Naive thymus-derived CD4-positive, alpha-beta T cell (primary cell): ENCODE measurements at regions of chr16 and their contacts with region 1.

Region 1: DNA sequence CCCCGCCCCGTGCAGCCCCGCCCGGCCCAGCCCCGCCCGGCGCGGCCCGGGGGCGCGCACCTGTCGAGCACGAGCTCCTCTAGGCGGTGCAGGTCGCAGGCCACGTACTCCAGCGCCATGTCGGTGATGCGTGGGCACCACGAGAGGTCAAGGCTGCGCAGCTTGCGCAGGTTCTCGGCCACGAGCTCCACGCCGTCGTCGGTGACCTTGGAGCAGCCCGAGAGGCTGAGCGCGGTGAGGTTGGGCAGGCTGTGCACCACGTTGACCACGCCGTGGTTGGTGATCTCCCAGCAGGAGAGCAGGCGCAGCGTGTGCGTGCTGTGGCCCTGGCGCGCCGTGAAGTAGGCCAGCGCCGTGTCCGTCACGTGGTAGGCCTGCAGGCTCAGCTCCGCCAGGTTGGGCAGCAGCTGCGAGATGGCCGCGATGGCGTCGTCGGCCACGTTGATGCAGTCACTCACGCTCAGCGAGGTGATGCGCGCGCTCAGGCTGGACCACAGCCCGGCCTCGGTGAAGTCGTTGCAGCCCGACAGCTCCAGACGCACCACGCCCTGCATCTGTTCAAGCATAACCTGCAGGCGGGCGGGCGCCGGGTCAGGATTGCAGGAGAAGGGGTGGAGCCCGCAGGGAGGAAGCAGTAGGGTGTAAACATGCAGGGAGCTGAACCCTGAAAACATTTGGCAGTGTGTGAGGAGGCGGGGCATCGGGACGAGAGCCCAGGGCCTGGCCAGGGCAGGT is 5.3 kb upstream of the WDR24 start:
- DNase-seq: peak; percentile 53 to 81 (median 74)
- ATAC-seq: peak; percentile 90
- H3K4me3 ChIP-seq: peak overlapping the region; percentile 91
- H3K4me3 Mint-ChIP-seq: peak overlapping the region; percentile 76 to 86 (median 84)
- H3K27ac ChIP-seq: peak overlapping the region; percentile 54
- H3K27ac Mint-ChIP-seq: peak overlapping the region; percentile 20 to 86 (median 79)
- H3K4me1 ChIP-seq: peaks cover 22 to 26% of the 10 kb centered on the region in 2 donors
- H3K4me1 Mint-ChIP-seq: peaks cover 4 to 40% (median 23%) of the 10 kb centered on the region in 7 donors
- H3K27me3 ChIP-seq: no peaks in the 10 kb centered on the region
- H3K27me3 Mint-ChIP-seq: peaks cover 0 to 22% (median 0%) of the 10 kb centered on the region in 5 donors

Region 2: DNA sequence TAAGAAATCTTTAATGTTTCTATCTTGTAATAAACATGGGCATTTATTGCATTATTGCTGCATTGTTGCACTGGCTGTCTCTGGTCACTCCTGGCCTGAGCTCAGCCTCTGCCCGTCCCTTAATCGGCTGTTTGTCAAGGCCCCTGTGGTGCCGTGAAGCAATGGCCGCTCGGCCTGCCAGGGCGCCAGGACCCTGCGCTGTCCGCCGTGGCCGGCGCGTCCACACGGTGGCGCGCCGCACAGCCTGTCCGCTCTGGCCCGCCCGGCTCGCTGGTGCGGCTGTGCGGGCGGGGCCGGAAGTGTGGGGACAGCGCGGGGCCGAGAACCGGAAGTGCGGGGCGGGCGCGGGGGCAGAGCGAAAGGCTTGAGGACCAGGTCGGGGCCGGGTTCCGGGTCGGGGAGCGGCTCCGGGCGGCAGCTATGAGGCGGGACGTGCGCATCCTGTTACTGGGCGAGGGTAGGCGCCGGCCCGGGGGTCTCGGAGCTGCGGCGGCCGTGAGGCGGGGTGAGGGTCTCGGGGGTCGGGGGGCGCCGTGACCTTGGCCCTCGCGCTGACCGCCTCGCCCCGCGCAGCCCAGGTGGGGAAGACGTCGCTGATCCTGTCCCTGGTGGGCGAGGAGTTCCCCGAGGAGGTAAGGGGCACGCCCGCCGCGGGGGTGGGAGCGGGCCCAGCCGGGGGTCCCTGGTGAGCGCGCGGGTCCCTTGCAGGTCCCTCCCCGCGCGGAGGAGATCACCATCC is 27.6 kb before region 1 on chr16 and contains the start of gene RHOT2:
- CTCF ChIA-PET with region 1: no interaction called
- POLR2A ChIA-PET with region 1: interaction called, 33 read pairs
- intact Hi-C with region 1: loop called in 1 of 2 experiments (anchors 1 kb)
- DNase-seq: peak; percentile 73 to 99 (median 87)
- ATAC-seq: peak; percentile 99
- H3K4me3 ChIP-seq: peak within 1 kb of the TSS; percentile 42
- H3K4me3 Mint-ChIP-seq: peak within 1 kb of the TSS; percentile 71 to 84 (median 80)
- H3K27ac ChIP-seq: peak within 1 kb of the TSS; percentile 75
- H3K27ac Mint-ChIP-seq: peak within 1 kb of the TSS in 8 of 9 donors; percentile 61 to 93 (median 86)
- H3K4me1 ChIP-seq: peaks cover 9 to 12% of the 10 kb centered on the region in 2 donors
- H3K4me1 Mint-ChIP-seq: peaks cover 0 to 10% (median 6%) of the 10 kb centered on the region in 7 donors
- H3K27me3 ChIP-seq: no peaks in the 10 kb centered on the region
- H3K27me3 Mint-ChIP-seq: no peaks in the 10 kb centered on the region
- total RNA-seq, gene RHOT2: 145 to 232 (median 186) TPM

Region 3: GRCh38 chr16:684067-684794 is 11.3 kb before region 1 on chr16 and contains the start of gene JMJD8:
- CTCF ChIA-PET with region 1: no interaction called
- POLR2A ChIA-PET with region 1: interaction called, 34 read pairs
- intact Hi-C with region 1: loop called in 1 of 2 experiments (anchors 1 kb)
- DNase-seq: peak; percentile 88 to 97 (median 91)
- ATAC-seq: peak; percentile 75
- H3K4me3 ChIP-seq: peak within 1 kb of the TSS; percentile 52
- H3K4me3 Mint-ChIP-seq: peak within 1 kb of the TSS; percentile 58 to 87 (median 76)
- H3K27ac ChIP-seq: peak within 1 kb of the TSS; percentile 78
- H3K27ac Mint-ChIP-seq: peak within 1 kb of the TSS in 6 of 9 donors; percentile 38 to 82 (median 58)
- H3K4me1 ChIP-seq: peaks cover 9 to 36% of the 10 kb centered on the region in 2 donors
- H3K4me1 Mint-ChIP-seq: peaks cover 10 to 31% (median 22%) of the 10 kb centered on the region in 7 donors
- H3K27me3 ChIP-seq: no peaks in the 10 kb centered on the region
- H3K27me3 Mint-ChIP-seq: no peaks in the 10 kb centered on the region
- total RNA-seq, gene JMJD8: 26.8 to 48.1 (median 37.2) TPM

Region 4: GRCh38 chr16:728131-728889 is 32.8 kb after region 1 on chr16:
- CTCF ChIA-PET with region 1: interaction called, 3 read pairs
- POLR2A ChIA-PET with region 1: interaction called, 7 read pairs
- intact Hi-C with region 1: loop called in 1 of 2 experiments (anchors 1 kb)
- DNase-seq: peak in 7 of 9 donors; percentile 46 to 64 (median 55)
- ATAC-seq: peak; percentile 85
- H3K4me3 ChIP-seq: peak overlapping the region; percentile 39
- H3K4me3 Mint-ChIP-seq: peak overlapping the region in 5 of 10 donors; percentile 25 to 87 (median 42)
- H3K27ac ChIP-seq: peak overlapping the region; percentile 21
- H3K27ac Mint-ChIP-seq: no peak overlapping the region
- H3K4me1 ChIP-seq: peaks cover 0 to 12% of the 10 kb centered on the region in 2 donors
- H3K4me1 Mint-ChIP-seq: no peaks in the 10 kb centered on the region
- H3K27me3 ChIP-seq: no peaks in the 10 kb centered on the region
- H3K27me3 Mint-ChIP-seq: peaks cover 0 to 6% (median 0%) of the 10 kb centered on the region in 5 donors

Region 5: GRCh38 chr16:788394-789126 is 93.0 kb after region 1 on chr16 and contains the start of gene CHTF18:
- CTCF ChIA-PET with region 1: no interaction called
- POLR2A ChIA-PET with region 1: interaction called, 5 read pairs
- intact Hi-C with region 1: loop called in 1 of 2 experiments (anchors 5 kb)
- DNase-seq: peak; percentile 90 to 95 (median 95)
- ATAC-seq: peak; percentile 98
- H3K4me3 ChIP-seq: peak within 1 kb of the TSS; percentile 74
- H3K4me3 Mint-ChIP-seq: peak within 1 kb of the TSS; percentile 78 to 90 (median 86)
- H3K27ac ChIP-seq: peak within 1 kb of the TSS; percentile 83
- H3K27ac Mint-ChIP-seq: peak within 1 kb of the TSS in 6 of 9 donors; percentile 53 to 89 (median 78)
- H3K4me1 ChIP-seq: peaks cover 5 to 8% of the 10 kb centered on the region in 2 donors
- H3K4me1 Mint-ChIP-seq: peaks cover 0 to 14% (median 5%) of the 10 kb centered on the region in 7 donors
- H3K27me3 ChIP-seq: no peaks in the 10 kb centered on the region
- H3K27me3 Mint-ChIP-seq: no peaks in the 10 kb centered on the region
- total RNA-seq, gene CHTF18: 32.0 to 74.8 (median 51.7) TPM

Region 6: GRCh38 chr16:938136-938795 is 242.7 kb after region 1 on chr16:
- CTCF ChIA-PET with region 1: no interaction called
- POLR2A ChIA-PET with region 1: no interaction called
- intact Hi-C with region 1: no loop called
- DNase-seq: no peak
- ATAC-seq: no peak
- H3K4me3 ChIP-seq: no peak overlapping the region
- H3K4me3 Mint-ChIP-seq: no peak overlapping the region
- H3K27ac ChIP-seq: no peak overlapping the region
- H3K27ac Mint-ChIP-seq: peak overlapping the region in 1 of 9 donors; percentile 41
- H3K4me1 ChIP-seq: no peaks in the 10 kb centered on the region
- H3K4me1 Mint-ChIP-seq: peaks cover 0 to 8% (median 0%) of the 10 kb centered on the region in 7 donors
- H3K27me3 ChIP-seq: no peaks in the 10 kb centered on the region
- H3K27me3 Mint-ChIP-seq: no peaks in the 10 kb centered on the region